ENCODE measurements at regions of chr2 and their contacts with region 1.

Region 1: GRCh38 chr2:74764429-74765272 is 69.3 kb upstream of the HK2 start:
- DNase-seq: peak; percentile 100
- ATAC-seq: peak; percentile 89
- H3K4me3 ChIP-seq: peak overlapping the region; percentile 0 to 58 (median 9); a peak in 2 of 6 replicates
- H3K27ac ChIP-seq: peak overlapping the region; percentile 81
- H3K4me1 ChIP-seq: peaks cover 91% of the 10 kb centered on the region
- H3K27me3 ChIP-seq: no peaks in the 10 kb centered on the region
- CTCF ChIP-seq: no peak
- EP300 ChIP-seq: peak; percentile 50 to 98; a peak in 3 of 4 replicates
- POLR2A ChIP-seq: no peak; a peak in 1 of 4 replicates
- RAD21 ChIP-seq: peak; percentile 29; the same call in 1 of the 2 replicates

Region 2: DNA sequence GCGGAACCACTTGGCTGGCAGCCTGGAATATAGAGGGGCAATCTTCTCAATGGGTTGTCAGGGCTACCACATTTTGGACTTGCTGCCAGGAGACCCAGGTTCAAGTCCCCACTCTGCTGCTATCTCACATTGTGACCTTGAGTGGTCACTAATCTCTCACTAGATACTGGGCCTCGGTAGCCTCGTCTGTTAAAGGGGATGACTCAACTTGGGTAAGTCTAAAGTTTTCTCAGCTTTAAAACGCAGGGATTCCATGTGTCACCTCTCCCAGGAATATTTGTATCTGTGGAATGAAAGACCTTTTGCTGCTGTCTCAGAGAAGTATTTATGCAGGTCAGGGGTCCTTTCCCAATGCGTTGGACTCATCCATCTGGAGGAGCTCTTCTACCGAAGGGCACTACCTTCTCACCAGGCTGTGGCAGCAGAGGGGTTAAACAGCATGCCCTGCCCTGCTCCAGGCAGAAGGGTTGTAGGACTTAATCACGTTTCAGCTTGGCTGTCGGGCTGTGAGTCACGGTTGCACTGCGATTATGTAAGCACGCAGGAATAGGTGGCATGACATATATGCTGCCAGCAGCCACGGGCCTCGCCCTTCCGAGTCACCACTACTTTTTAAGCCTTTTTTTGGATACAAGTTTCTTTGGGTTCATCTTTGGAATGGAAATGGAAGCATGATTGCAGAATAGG is 24.1 kb before region 1 on chr2:
- CTCF ChIA-PET with region 1: no interaction called
- POLR2A ChIA-PET with region 1: interaction called, 16 read pairs
- in situ Hi-C with region 1: no loop called
- intact Hi-C with region 1: no loop called
- DNase-seq: peak; percentile 76
- ATAC-seq: peak; percentile 64
- H3K4me3 ChIP-seq: peak overlapping the region in 1 of 3 experiments; percentile 32; a peak in 2 of 6 replicates
- H3K27ac ChIP-seq: no peak overlapping the region
- H3K4me1 ChIP-seq: peaks cover 54% of the 10 kb centered on the region
- H3K27me3 ChIP-seq: peaks cover 2 to 24% of the 10 kb centered on the region in 2 experiments; a peak in 3 of 5 replicates
- CTCF ChIP-seq: peak; percentile 45
- EP300 ChIP-seq: peak in 1 of 2 experiments; percentile 53; a peak in 2 of 4 replicates
- POLR2A ChIP-seq: no peak
- RAD21 ChIP-seq: 0 out of 2 replicates have a peak, but pooled peaks have one; percentile 9

Region 3: GRCh38 chr2:74816540-74817303 is 52.1 kb after region 1 on chr2:
- CTCF ChIA-PET with region 1: interaction called, 3 read pairs
- POLR2A ChIA-PET with region 1: interaction called, 11 read pairs
- in situ Hi-C with region 1: no loop called
- intact Hi-C with region 1: loop called (anchors 2 kb)
- DNase-seq: peak; percentile 92
- ATAC-seq: peak; percentile 96
- H3K4me3 ChIP-seq: peak overlapping the region; percentile 25 to 61 (median 43)
- H3K27ac ChIP-seq: peak overlapping the region; percentile 63
- H3K4me1 ChIP-seq: peaks cover 84% of the 10 kb centered on the region
- H3K27me3 ChIP-seq: 0 out of 5 replicates have a peak, but pooled peaks cover 0 to 4% of the 10 kb centered on the region in 2 experiments
- CTCF ChIP-seq: no peak
- EP300 ChIP-seq: peak in 1 of 2 experiments; percentile 76; a peak in 2 of 4 replicates
- POLR2A ChIP-seq: no peak; a peak in 1 of 4 replicates
- RAD21 ChIP-seq: 0 out of 2 replicates have a peak, but pooled peaks have one; percentile 27

Region 4: DNA sequence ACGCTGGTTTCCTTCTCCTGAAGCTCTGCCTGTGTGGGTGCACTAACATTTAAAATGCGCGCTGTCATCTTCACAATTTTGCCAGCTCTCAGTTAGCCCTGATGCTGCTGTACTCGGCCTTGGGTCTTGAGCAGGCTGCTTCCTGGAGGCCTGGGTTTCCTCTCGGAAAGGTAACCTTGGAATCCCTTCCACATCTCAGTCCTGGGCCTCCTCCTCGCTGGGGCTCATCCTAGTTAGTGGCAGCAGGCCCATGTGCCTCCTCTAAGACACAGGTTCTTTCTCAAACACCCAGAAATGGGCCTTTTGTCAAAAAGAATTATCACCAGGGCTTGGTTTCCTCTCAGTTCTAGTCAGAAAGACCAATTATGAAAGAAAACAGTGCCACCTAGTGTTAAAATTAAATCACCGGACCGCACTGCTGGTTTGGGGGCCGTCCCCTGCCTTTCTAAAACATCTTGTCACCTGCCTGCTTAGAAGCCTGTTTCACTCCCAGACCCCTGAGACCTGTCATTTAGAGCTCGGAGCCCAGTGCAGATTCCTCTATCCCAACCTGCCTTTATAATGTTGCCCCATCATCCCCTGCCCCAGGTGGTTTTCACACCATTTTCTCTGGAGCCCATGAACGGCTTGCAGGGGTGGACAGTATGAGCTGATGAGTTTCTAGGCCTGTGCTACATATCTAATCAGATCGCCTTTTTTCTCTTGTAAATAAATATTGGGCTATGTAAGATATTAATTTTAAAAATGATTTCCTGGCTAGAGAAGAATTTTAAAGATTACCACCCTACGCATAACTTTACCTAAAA is 111.6 kb after region 1 on chr2:
- CTCF ChIA-PET with region 1: interaction called, 7 read pairs
- POLR2A ChIA-PET with region 1: interaction called, 10 read pairs
- in situ Hi-C with region 1: loop called (anchors 5 kb)
- intact Hi-C with region 1: loop called (anchors 1 kb)
- DNase-seq: peak; percentile 61
- ATAC-seq: peak; percentile 71
- H3K4me3 ChIP-seq: no peak overlapping the region
- H3K27ac ChIP-seq: no peak overlapping the region
- H3K4me1 ChIP-seq: no peaks in the 10 kb centered on the region
- H3K27me3 ChIP-seq: no peaks in the 10 kb centered on the region
- CTCF ChIP-seq: peak; percentile 75
- EP300 ChIP-seq: no peak
- POLR2A ChIP-seq: no peak
- RAD21 ChIP-seq: peak; percentile 75

Measured in HepG2 (cell line).